ENCODE measurements at regions of chr6 and their contacts with region 1.

Region 1: DNA sequence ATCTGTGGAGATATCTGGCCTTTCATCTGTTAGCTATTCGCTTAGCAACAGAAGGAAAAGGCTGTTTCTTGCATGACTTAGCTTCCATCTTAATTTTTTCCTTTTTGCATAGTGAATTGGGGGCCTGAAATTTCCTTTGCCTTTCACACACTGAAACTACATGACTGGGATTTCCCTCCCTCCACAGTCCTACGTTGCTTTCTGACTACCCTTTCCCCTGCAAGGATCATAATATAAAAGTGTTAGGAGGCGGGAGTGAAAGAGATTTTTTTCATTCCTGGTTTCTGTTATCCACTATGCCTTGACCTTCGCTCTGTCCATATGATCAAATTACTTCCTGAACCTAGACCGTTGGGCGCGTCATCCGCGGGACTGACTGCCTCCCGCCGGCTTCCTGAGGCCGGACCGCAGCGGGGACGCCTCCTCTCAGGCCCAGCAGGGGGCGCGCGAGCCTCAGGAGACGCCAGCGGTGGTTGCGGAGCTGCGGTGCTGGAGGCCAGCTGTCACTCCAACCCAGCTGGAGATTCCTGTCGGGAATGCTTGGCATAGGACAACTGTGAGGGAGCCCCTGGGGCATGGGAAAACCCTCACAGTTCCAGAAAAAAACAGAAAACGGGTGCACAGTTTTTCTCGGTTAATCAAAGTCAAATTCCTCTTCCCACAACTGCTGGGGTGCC is 55.6 kb downstream of the MEP1A start:
- DNase-seq: peak; percentile 69 to 98 (median 88)

Region 2: DNA sequence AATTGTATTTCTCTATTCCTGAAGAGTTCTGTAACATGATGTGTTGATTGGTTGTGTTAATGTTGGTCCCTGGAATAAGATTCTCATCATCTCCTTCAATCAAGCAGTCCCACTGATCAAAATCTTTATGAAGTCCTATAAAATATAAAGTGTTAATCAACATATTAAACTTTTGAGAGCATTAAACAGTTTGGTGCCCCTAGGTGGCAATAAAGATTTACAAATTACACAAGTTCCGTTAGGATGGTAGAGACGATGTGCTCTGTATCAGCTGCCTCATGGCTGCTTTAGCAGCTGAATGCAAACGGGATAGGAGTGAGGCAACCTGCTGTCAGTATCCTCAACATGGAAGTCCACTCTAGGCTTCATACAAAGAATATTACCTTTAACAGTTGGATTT is 144.3 kb before region 1 on chr6:
- intact Hi-C with region 1: loop called (anchors 10 kb)
- DNase-seq: peak in 1 of 10 donors; percentile 10

Region 3: GRCh38 chr6:46990031-46990644 is 141.3 kb after region 1 on chr6:
- intact Hi-C with region 1: loop called (anchors 2 kb)
- DNase-seq: no peak

Region 4: GRCh38 chr6:47047479-47048407 is 198.9 kb after region 1 on chr6:
- intact Hi-C with region 1: loop called (anchors 2 kb)
- DNase-seq: peak in 4 of 10 donors; percentile 24 to 33 (median 28)

Region 5: DNA sequence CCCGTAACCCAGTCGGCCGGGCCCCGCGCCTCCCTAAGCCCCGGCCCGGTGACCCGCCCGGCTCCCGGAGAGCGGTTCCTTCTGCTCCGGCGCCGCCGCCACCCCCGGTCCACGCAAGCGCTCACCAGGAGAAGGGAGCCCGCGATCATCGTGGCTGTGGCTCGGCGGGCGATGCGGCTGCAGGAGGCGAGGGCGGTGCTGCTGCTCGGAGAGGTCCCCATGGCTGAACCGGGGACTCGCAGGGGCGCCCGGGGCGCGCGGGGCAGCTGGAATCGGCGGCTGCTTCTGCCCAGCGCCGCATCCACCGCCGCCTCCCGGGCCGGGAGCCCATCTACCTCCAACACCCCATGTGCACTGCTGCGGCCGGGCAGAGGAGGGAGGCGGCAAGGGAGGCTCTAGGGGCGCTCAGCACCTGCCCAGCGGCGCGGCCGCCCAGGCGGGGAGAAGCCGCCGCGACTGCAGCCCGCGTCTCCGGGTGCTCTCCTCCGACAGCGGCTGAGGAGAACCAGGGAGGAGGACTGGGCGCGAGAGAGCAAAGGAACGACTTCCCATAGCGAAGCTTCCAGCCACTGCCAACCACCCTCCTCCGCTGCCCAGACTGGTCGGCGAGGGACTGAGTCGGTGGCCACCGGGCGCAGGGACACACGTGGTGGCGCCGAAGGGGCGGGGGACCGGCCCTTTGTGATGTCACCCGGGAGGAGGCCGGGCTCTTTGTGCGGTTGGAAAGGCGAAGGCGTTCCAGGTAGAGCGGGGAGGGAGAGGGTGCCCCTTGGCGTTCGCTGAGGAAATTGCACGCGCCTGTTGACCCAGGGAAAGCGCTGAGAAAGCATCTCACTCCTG is 460.7 kb after region 1 on chr6 and contains the start of gene TNFRSF21:
- intact Hi-C with region 1: loop called (anchors 5 kb)
- DNase-seq: peak; percentile 91 to 99 (median 95)